B cell (primary cell): ENCODE measurements at regions of chr2 and their contacts with region 1.

Region 1: DNA sequence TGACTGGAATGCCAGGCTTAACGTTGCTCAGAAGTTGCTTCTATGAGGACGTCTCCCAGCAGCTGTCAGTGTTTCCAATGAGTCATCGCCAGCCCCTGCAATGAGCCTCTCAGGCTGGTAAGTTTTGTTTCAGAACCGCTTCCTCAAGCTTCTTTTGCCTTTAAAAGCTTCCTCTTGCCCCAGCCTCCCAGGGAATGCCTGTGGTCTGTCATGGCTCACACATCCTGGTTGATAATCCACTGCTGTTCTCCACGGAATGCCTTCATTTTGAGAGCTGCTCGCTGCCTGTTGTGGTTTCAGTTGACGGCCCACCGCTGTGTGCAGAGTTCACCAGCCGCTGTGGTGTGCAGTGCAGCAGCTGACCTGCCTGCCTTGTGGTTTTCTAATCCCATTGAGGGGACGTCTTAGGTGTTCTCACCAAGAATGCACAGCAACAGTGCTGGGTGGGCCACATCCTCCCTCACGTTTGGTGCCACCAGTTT is 96.4 kb downstream of the RTP5 start:
- DNase-seq: peak; percentile 79
- ATAC-seq: peak; percentile 80
- H3K4me3 ChIP-seq: peak overlapping the region in 4 of 5 experiments; percentile 28 to 51 (median 36)
- H3K4me3 Mint-ChIP-seq: peak overlapping the region; percentile 87
- H3K27ac ChIP-seq: peak overlapping the region; percentile 70 to 74
- H3K27ac Mint-ChIP-seq: peak overlapping the region; percentile 86
- H3K4me1 ChIP-seq: peaks cover 62 to 65% of the 10 kb centered on the region in 2 donors
- H3K4me1 Mint-ChIP-seq: peaks cover 64% of the 10 kb centered on the region
- H3K27me3 ChIP-seq: no peaks in the 10 kb centered on the region
- H3K27me3 Mint-ChIP-seq: no peaks in the 10 kb centered on the region
- CTCF ChIP-seq: no peak

Region 2: GRCh38 chr2:241933179-241933911 is 32.6 kb before region 1 on chr2:
- CTCF ChIA-PET with region 1: no interaction called
- POLR2A ChIA-PET with region 1: no interaction called
- intact Hi-C with region 1: no loop called
- DNase-seq: no peak
- ATAC-seq: no peak
- H3K4me3 ChIP-seq: no peak overlapping the region
- H3K4me3 Mint-ChIP-seq: no peak overlapping the region
- H3K27ac ChIP-seq: no peak overlapping the region
- H3K27ac Mint-ChIP-seq: no peak overlapping the region
- H3K4me1 ChIP-seq: no peaks in the 10 kb centered on the region
- H3K4me1 Mint-ChIP-seq: no peaks in the 10 kb centered on the region
- H3K27me3 ChIP-seq: no peaks in the 10 kb centered on the region
- H3K27me3 Mint-ChIP-seq: no peaks in the 10 kb centered on the region
- CTCF ChIP-seq: no peak

Region 3: DNA sequence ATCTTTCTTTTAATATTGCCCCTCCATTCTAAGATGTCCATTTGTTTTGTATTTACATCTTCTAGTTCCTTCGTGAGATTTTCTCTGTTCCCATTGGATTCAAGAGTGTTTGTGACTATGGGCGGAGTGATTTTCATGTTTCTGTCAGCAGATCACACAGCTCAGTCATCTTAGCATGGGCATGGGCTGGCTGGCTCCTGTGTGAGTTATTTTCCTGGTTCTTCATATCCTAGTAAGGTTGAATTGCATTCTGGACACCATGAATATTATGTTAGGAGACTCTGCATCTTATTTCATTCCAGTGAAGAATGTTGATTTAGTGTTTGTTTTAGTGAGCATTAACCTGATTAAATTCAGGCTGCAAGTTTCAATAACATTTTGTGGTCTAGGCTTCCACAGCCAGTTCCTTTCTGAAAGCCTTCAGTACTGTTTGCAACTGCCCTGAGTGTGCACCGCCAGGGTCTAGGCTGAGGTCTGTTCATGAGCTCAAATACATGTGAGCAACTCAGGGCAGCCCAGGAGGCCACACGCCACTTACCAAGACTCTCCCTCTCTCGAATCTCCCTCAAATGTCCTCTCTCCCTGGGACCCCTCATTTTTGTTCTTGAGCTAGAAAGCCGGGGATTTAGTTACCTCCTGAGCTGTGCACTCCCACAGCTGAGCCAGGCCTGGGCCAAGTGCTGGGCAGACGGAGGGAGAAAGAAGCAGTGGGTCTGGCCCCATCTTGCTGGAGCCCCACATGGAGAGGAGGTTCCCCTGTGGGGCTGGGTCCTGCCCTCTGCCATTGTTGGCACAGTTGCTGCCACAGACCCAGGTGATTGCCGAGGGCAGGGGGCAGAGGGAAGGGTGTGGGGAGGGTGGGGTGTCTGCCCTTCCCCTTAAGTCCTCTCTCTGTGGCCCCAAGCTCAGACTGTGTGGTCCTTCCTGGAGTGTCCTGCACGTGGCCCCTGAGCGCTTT is 49.4 kb after region 1 on chr2:
- CTCF ChIA-PET with region 1: no interaction called
- POLR2A ChIA-PET with region 1: no interaction called
- intact Hi-C with region 1: loop called (anchors 2 kb)
- DNase-seq: no peak
- ATAC-seq: no peak
- H3K4me3 ChIP-seq: no peak overlapping the region
- H3K4me3 Mint-ChIP-seq: no peak overlapping the region
- H3K27ac ChIP-seq: no peak overlapping the region
- H3K27ac Mint-ChIP-seq: no peak overlapping the region
- H3K4me1 ChIP-seq: peaks cover 0 to 7% of the 10 kb centered on the region in 2 donors
- H3K4me1 Mint-ChIP-seq: peaks cover 31% of the 10 kb centered on the region
- H3K27me3 ChIP-seq: no peaks in the 10 kb centered on the region
- H3K27me3 Mint-ChIP-seq: no peaks in the 10 kb centered on the region
- CTCF ChIP-seq: no peak